ENCODE measurements at regions of chr7 and their contacts with region 1.

Region 1: DNA sequence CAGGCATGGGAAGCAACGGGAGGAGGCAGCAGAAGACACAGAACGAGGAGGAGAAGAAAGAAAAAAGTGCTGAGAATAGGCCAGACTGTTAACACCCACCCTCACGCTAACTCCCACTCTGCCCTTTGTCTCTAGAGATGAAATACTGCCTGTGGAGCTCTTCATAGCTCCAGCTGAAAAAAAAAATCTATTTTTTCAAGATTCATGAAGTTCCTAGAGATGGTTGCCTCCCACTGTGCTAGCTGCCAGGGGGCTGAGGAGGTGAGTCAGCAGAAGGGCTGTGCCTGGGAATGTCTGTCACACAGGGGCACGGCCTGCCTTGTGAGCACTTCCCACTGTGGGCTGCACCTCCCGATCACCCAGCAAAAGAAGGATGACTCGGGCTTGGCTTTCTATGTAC is 144.5 kb downstream of the RNF216 start:
- DNase-seq: peak; percentile 50
- H3K4me3 ChIP-seq: no peak overlapping the region
- H3K27ac ChIP-seq: peak overlapping the region; percentile 97 to 99
- H3K4me1 ChIP-seq: peaks cover 51 to 65% of the 10 kb centered on the region in 2 experiments
- H3K27me3 ChIP-seq: no peaks in the 10 kb centered on the region
- CTCF ChIP-seq: no peak
- EP300 ChIP-seq: 0 out of 4 replicates have a peak, but pooled peaks of 1 of the 2 experiments have one; percentile 25
- RAD21 ChIP-seq: no peak

Region 2: GRCh38 chr7:5574770-5575269 is 62.1 kb before region 1 on chr7:
- CTCF ChIA-PET with region 1: no interaction called
- POLR2A ChIA-PET with region 1: interaction called, 11 read pairs
- DNase-seq: peak; percentile 92
- H3K4me3 ChIP-seq: no peak overlapping the region
- H3K27ac ChIP-seq: peak overlapping the region in 1 of 2 experiments; percentile 90; a peak in 2 of 4 replicates
- H3K4me1 ChIP-seq: peaks cover 0 to 16% of the 10 kb centered on the region in 2 experiments; a peak in 1 of 4 replicates
- H3K27me3 ChIP-seq: no peaks in the 10 kb centered on the region
- CTCF ChIP-seq: no peak
- EP300 ChIP-seq: no peak
- RAD21 ChIP-seq: no peak

Region 3: GRCh38 chr7:5797716-5798115 is 160.8 kb after region 1 on chr7:
- CTCF ChIA-PET with region 1: no interaction called
- POLR2A ChIA-PET with region 1: no interaction called
- DNase-seq: no peak
- H3K4me3 ChIP-seq: no peak overlapping the region
- H3K27ac ChIP-seq: no peak overlapping the region
- H3K4me1 ChIP-seq: no peaks in the 10 kb centered on the region
- H3K27me3 ChIP-seq: no peaks in the 10 kb centered on the region
- CTCF ChIP-seq: no peak
- EP300 ChIP-seq: no peak
- RAD21 ChIP-seq: no peak